Body of pancreas (tissue), 4 donors: ENCODE measurements at regions of chr13 and their contacts with region 1.

Region 1: GRCh38 chr13:97359181-97360057 is 74.5 kb upstream of the RAP2A start:
- DNase-seq: peak; percentile 42 to 64 (median 54)
- ATAC-seq: peak; percentile 85
- H3K4me3 ChIP-seq: no peak overlapping the region
- H3K27ac ChIP-seq: no peak overlapping the region
- H3K4me1 ChIP-seq: no peaks in the 10 kb centered on the region
- H3K27me3 ChIP-seq: no peaks in the 10 kb centered on the region
- CTCF ChIP-seq: peak; percentile 61 to 81 (median 76)
- POLR2A ChIP-seq: no peak

Region 2: DNA sequence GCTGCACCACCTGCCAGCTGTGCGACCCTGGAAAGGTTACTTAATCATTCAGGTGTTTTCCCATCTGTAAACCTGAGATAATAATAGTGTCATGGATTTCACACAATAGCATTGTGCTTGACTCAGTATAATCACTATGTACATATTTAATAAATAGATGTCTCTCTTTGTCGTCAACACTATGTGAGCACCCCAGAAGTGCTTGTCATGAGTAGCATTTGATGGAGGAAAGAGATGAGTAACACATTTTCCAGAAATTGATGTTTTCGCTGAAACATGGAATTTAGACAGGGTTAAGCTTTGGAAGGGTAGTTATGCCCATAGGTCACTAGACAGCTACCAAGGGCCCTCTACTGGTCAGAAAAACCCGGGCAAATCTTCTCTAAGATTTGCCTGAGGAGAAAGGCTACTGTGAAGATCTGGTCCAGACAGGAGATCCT is 146.8 kb before region 1 on chr13:
- intact Hi-C with region 1: loop called (anchors 10 kb)
- DNase-seq: peak; percentile 32 to 54 (median 42)
- ATAC-seq: peak; percentile 69
- H3K4me3 ChIP-seq: no peak overlapping the region
- H3K27ac ChIP-seq: no peak overlapping the region
- H3K4me1 ChIP-seq: no peaks in the 10 kb centered on the region
- H3K27me3 ChIP-seq: no peaks in the 10 kb centered on the region
- CTCF ChIP-seq: peak in 6 of 7 experiments; percentile 33 to 59 (median 49)
- POLR2A ChIP-seq: no peak